PC-3 (cell line): ENCODE measurements at regions of chr10 and their contacts with region 1.

Region 1: GRCh38 chr10:86688398-86688921 is 20.1 kb downstream of the LDB3 start:
- DNase-seq: peak; percentile 62
- ATAC-seq: peak; percentile 77
- H3K4me3 ChIP-seq: no peak overlapping the region
- H3K27ac ChIP-seq: no peak overlapping the region
- H3K4me1 ChIP-seq: no peaks in the 10 kb centered on the region
- H3K27me3 ChIP-seq: no peaks in the 10 kb centered on the region
- CTCF ChIP-seq: peak; percentile 70

Region 2: DNA sequence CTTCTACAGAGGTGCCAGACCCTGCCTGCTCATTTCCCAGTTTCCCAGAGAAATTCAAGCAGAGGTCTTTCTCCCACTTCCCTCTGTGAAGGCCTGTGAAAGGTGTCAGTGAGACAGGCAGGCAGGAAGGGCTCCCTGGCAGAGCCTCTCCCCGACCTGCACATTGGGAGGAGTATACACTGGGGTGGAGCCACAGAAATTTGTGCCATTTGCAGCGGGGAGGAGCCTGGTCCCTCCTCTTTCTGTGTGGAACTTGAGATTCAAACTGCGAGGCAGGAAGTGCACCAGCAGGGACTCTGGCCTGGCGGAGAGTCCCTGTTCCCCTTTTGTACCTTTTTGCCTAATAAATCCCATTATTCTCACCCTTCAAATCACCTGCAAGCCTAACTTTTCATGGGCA is 88.7 kb before region 1 on chr10:
- CTCF ChIA-PET with region 1: no interaction called
- POLR2A ChIA-PET with region 1: no interaction called
- intact Hi-C with region 1: loop called (anchors 10 kb)
- DNase-seq: no peak
- ATAC-seq: no peak
- H3K4me3 ChIP-seq: no peak overlapping the region
- H3K27ac ChIP-seq: no peak overlapping the region
- H3K4me1 ChIP-seq: no peaks in the 10 kb centered on the region
- H3K27me3 ChIP-seq: no peaks in the 10 kb centered on the region
- CTCF ChIP-seq: no peak

Region 3: GRCh38 chr10:86648706-86649427 is 39.6 kb before region 1 on chr10:
- CTCF ChIA-PET with region 1: no interaction called
- POLR2A ChIA-PET with region 1: no interaction called
- intact Hi-C with region 1: loop called (anchors 5 kb)
- DNase-seq: peak; percentile 92
- ATAC-seq: peak; percentile 92
- H3K4me3 ChIP-seq: no peak overlapping the region
- H3K27ac ChIP-seq: peak overlapping the region; percentile 36; the same call in 1 of the 2 replicates
- H3K4me1 ChIP-seq: peaks cover 32% of the 10 kb centered on the region
- H3K27me3 ChIP-seq: no peaks in the 10 kb centered on the region
- CTCF ChIP-seq: no peak

Region 4: GRCh38 chr10:86830043-86830591 is 141.7 kb after region 1 on chr10:
- CTCF ChIA-PET with region 1: no interaction called
- POLR2A ChIA-PET with region 1: no interaction called
- intact Hi-C with region 1: no loop called
- DNase-seq: no peak
- ATAC-seq: no peak
- H3K4me3 ChIP-seq: no peak overlapping the region
- H3K27ac ChIP-seq: no peak overlapping the region
- H3K4me1 ChIP-seq: peaks cover 24% of the 10 kb centered on the region
- H3K27me3 ChIP-seq: no peaks in the 10 kb centered on the region
- CTCF ChIP-seq: no peak

Region 5: DNA sequence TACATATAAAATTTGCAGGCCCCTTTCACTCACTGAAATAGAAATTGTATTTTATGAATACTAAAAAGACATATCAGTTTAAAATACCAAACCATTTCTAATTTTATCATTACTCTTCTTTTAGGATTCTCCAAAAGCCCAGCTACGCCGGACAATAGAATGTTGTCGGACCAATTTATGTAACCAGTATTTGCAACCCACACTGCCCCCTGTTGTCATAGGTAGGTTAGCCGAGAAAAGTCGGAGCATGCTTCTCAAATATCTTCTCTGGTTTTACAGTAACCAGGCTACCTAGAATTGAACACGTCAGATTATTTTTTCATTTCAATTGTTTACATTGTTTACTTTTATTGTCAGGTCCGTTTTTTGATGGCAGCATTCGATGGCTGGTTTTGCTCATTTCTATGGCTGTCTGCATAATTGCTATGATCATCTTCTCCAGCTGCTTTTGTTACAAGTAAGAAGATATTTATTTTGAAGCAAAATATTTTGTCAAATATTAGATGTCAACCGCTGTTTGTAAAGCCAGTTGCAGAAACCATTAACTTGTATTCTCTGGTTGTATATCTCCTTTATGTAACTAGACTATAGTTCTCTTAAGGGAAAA is 211.3 kb after region 1 on chr10:
- CTCF ChIA-PET with region 1: interaction called, 4 read pairs
- POLR2A ChIA-PET with region 1: no interaction called
- intact Hi-C with region 1: loop called (anchors 2 kb)
- DNase-seq: peak; percentile 67
- ATAC-seq: peak; percentile 72
- H3K4me3 ChIP-seq: no peak overlapping the region
- H3K27ac ChIP-seq: no peak overlapping the region
- H3K4me1 ChIP-seq: no peaks in the 10 kb centered on the region
- H3K27me3 ChIP-seq: no peaks in the 10 kb centered on the region
- CTCF ChIP-seq: peak; percentile 73

Region 6: DNA sequence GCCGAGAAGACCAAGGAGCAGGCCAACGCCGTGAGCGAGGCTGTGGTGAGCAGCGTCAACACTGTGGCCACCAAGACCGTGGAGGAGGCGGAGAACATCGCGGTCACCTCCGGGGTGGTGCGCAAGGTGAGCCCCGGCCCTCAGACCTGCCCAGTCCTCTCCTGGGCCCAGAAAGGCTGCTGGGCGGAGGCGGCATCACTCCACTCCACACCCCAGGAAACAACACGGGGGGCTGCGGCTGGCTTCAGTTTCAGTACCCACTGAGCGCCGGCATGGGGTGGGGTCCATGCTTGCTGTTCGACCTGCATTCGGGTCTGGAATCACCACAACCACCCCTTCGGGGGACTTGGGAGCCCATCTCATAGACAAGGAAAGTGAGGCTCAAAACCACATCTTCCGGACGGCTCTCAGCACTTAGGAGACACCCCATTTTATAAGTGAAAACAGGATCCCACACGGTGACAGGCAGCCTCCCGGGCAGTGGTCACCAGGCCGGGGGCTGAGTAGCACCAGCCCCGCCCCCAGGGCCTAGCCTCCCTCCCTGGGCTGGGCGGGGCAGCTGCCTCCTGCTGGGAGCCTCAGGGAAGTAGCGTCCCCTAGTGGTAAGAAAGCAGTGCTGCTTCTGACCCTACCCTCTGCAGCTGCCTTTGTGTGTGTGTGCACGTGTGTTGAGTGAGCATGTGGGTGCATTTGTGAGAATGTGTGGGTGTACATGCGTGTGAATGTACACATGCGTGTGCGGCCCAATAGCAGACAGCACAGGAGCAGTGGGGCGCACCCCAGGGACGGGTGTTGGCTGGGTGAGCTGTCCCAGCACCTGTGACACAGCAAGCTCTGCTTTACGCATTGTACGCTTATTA is 271.8 kb after region 1 on chr10:
- CTCF ChIA-PET with region 1: no interaction called
- POLR2A ChIA-PET with region 1: no interaction called
- intact Hi-C with region 1: loop called (anchors 2 kb)
- DNase-seq: peak; percentile 71
- ATAC-seq: peak; percentile 77
- H3K4me3 ChIP-seq: no peak overlapping the region
- H3K27ac ChIP-seq: no peak overlapping the region
- H3K4me1 ChIP-seq: peaks cover 33% of the 10 kb centered on the region
- H3K27me3 ChIP-seq: no peaks in the 10 kb centered on the region
- CTCF ChIP-seq: peak; percentile 92